ENCODE measurements at regions of chr6 and their contacts with region 1.

Region 1: DNA sequence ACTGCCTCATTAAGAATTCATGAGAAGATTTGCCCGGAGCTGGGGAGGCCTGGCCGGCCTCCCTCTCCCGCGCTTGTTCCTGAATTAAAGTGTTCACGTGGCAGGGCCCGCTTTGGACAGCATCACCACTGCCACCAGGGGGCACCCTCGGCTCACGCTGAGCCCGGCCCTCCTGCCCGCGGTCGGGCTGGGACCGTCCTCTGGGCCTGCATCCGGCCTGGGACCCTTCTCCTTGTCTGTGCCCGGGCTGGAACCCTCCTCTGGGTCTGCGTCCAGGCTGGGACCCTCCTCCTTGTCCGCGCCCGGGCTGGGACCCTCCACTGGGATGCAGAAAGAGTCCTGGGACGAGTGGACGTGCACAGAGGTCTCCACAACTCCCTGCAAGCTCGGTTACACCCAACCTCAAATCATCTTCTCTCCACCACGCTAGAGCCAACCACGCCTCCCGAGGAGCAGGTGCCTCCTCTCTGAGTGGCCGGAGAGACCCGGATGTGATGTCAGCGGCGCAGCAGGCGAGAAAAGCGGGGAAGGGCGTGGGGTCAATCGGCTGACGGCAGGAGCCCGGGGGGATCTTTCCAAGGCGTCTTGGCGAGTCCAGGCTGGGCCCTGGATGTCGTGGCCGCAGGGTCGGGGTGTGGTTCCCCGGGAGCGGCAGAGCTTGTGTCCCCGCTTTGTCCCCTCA is 50.9 kb upstream of the DACT2 start:
- DNase-seq: peak; percentile 92

Region 2: GRCh38 chr6:168526841-168527281 is 156.4 kb after region 1 on chr6:
- intact Hi-C with region 1: loop called in 1 of 2 experiments (anchors 10 kb)
- DNase-seq: peak; percentile 81

Region 3: DNA sequence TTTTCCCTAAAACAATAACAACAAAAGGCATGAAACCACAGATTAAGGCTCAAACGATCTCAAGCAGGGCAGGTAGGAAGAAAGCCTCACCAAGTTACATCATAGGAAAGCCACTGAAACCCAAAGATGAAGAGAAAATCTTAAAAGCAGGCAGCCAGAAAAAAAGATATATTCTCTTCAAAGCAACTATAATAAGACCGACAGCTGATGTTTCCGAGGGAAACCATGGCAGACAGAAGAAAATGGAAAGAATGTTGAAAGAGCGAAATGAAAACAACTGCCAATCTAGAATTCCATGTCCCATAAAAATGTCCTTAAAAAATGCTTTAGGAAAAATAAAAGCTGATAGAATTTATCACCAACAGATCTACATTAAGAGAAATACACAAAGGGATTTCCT is 1044.7 kb after region 1 on chr6:
- intact Hi-C with region 1: no loop called
- DNase-seq: no peak